MCF 10A (cell line): ENCODE measurements at regions of chr15 and their contacts with region 1.

Region 1: DNA sequence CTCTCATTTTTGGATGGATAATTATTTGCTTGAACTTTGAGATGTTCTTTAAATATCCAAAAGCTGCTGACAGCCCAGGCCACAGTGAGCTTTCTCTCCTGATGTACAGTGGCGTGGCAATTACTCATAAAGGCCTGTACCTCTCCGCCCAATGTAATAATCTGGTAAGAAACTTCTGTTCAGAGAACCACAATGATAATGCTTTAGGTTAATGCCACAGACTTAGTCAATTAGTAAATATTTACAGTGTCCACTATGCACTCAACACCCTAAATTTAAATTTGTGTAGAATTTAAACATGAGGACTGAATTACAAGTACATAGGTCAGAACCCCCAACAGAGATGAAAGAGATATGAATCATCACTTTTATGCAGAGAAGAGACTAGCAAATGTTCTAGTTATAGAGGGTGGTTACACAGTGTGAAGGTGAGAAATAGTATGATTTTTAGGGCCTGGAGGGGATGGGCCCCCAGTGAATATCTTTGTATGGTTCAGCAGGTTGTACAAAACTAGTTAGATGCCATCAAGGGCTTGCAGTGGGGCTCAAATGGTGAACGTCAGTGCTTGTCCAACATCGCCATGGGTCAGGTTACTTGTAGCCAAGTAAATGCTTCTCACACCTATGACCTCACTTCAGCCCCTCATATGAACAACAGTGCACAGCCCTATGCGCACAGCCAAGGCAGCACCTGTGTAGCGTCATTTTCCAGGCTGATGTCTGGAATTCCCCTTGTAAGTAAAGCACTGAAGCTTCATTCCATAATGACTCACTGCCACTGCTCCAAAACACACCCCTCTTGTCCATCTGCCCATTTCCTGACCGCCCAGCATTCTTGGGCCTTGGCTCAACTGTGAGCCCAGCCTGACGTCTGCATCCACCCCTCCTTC is 13.3 kb downstream of the ABHD2 start:
- DNase-seq: peak; percentile 94
- H3K4me3 Mint-ChIP-seq: peak overlapping the region; percentile 23
- H3K27ac Mint-ChIP-seq: peak overlapping the region; percentile 98
- H3K4me1 Mint-ChIP-seq: peaks cover 48% of the 10 kb centered on the region
- H3K27me3 Mint-ChIP-seq: no peaks in the 10 kb centered on the region
- CTCF ChIP-seq: no peak

Region 2: GRCh38 chr15:88791637-88792036 is 309.9 kb before region 1 on chr15:
- CTCF ChIA-PET with region 1: no interaction called
- POLR2A ChIA-PET with region 1: no interaction called
- intact Hi-C with region 1: no loop called
- DNase-seq: no peak
- H3K4me3 Mint-ChIP-seq: no peak overlapping the region
- H3K27ac Mint-ChIP-seq: peak overlapping the region; percentile 69
- H3K4me1 Mint-ChIP-seq: peaks cover 25% of the 10 kb centered on the region
- H3K27me3 Mint-ChIP-seq: no peaks in the 10 kb centered on the region
- CTCF ChIP-seq: no peak

Region 3: GRCh38 chr15:89112341-89112971 is 10.9 kb after region 1 on chr15:
- CTCF ChIA-PET with region 1: interaction called, 3 read pairs
- POLR2A ChIA-PET with region 1: interaction called, 61 read pairs
- intact Hi-C with region 1: no loop called
- DNase-seq: peak; percentile 49
- H3K4me3 Mint-ChIP-seq: no peak overlapping the region
- H3K27ac Mint-ChIP-seq: peak overlapping the region; percentile 69
- H3K4me1 Mint-ChIP-seq: peaks cover 20% of the 10 kb centered on the region
- H3K27me3 Mint-ChIP-seq: no peaks in the 10 kb centered on the region
- CTCF ChIP-seq: no peak

Region 4: GRCh38 chr15:89119489-89120123 is 18.1 kb after region 1 on chr15:
- CTCF ChIA-PET with region 1: interaction called, 3 read pairs
- POLR2A ChIA-PET with region 1: interaction called, 61 read pairs
- intact Hi-C with region 1: loop called (anchors 2 kb)
- DNase-seq: peak; percentile 66
- H3K4me3 Mint-ChIP-seq: no peak overlapping the region
- H3K27ac Mint-ChIP-seq: peak overlapping the region; percentile 91
- H3K4me1 Mint-ChIP-seq: peaks cover 47% of the 10 kb centered on the region
- H3K27me3 Mint-ChIP-seq: no peaks in the 10 kb centered on the region
- CTCF ChIP-seq: no peak

Region 5: GRCh38 chr15:89442671-89443307 is 341.2 kb after region 1 on chr15:
- CTCF ChIA-PET with region 1: no interaction called
- POLR2A ChIA-PET with region 1: no interaction called
- intact Hi-C with region 1: no loop called
- DNase-seq: peak; percentile 70
- H3K4me3 Mint-ChIP-seq: no peak overlapping the region
- H3K27ac Mint-ChIP-seq: no peak overlapping the region
- H3K4me1 Mint-ChIP-seq: no peaks in the 10 kb centered on the region
- H3K27me3 Mint-ChIP-seq: peaks cover 25% of the 10 kb centered on the region
- CTCF ChIP-seq: peak; percentile 75